ENCODE measurements at regions of chr7 and their contacts with region 1.

Region 1: DNA sequence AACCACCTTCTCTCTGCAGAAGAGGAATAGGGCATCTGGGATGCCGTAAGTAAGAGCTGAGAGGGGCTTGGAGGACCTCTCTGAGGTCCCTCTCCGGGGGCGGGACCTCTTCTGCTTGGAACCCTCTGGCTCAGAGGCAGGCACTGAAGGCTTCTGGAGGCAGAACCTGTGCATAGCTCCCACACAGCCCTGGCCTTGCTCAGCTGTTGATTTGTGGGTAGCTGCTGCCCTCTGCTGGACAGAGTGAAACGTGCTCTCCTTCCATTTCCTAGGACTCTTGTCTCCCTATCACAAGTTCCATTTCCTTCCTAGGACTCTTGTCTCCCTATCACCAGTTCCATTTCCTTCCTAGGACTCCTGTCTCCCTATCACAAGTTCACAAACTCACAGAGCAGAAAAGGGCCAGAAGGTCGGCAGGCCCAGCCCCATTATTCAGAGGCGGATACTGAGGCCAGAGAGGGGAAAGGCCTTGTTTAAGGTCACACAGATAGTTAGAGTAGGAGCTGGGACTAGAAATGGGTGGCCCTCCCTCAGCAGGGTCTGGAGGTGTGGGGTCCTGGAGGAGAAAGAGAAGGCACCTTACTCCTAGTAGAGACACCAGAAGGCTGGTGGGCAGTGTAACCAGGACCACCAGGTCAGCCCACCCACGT is 30.3 kb upstream of the GARS1 start:
- DNase-seq: peak; percentile 85
- H3K4me3 ChIP-seq: no peak overlapping the region
- CTCF ChIP-seq: peak; percentile 76

Region 2: DNA sequence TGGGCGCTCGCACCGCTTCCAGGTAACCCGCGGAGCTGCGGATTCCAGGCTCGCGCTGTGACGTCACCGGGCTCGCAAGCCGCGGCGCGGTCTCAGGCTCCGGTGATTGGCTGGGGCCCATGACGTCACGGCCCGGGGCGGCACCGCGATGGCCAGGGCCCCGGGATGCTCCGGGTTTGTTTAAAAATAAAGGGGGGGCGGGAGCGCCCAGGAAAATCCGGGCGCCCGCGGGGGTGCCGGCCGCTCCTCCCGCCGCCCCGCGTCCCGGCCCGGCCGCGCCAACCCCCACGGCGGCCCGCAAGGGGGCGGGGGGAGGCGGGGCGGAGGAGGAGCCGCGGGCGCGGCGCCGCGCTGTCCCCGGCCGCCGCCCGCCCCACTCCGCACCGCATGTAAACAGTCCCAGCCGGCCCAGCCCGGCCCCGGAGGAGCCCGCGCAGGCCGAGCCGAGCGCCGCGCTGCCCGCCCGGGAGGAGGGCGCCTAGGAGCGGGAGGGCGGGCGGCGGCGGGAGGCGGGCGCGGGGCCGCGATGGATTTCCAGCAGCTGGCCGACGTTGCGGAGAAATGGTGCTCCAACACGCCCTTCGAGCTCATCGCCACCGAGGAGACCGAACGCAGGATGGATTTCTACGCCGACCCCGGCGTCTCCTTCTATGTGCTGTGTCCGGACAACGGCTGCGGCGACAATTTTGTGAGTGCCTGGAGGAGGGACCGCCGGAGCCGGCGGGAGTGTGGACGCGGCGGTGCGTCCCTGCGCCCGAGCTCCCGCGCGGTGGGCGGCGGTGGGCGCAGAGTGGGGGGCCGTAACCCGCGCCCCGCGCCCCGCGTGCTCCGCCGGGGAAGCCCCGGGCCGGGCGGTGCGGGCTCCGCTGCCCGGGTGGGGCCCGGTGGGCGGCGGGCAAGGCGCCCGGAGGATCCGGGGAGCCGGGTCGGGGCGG is 429.5 kb before region 1 on chr7 and contains the start of gene MTURN:
- in situ Hi-C with region 1: loop called (anchors 25 kb)
- DNase-seq: peak; percentile 46
- H3K4me3 ChIP-seq: peak within 1 kb of the TSS; percentile 87
- CTCF ChIP-seq: no peak

Region 3: DNA sequence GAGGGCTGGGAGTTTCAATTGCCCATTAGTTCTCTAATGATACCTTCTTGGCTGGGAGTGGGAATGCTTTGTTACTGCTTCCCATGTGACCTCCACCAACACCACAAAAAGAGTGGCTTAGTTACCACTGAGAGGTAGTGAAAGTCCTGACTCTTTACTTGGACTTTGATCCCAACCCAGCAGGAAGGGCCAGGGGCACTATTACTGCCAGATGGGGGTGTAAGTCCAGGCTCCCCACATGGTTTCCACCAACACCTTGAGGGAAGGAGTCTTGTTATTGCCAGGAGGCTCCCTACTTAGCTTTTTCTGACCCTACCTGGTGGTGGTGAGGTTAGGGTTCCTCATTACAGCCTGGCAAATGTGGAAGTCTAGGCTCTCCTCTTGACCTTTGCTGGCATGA is 71.1 kb before region 1 on chr7:
- in situ Hi-C with region 1: no loop called
- DNase-seq: no peak
- H3K4me3 ChIP-seq: no peak overlapping the region
- CTCF ChIP-seq: no peak